Naive thymus-derived CD4-positive, alpha-beta T cell (primary cell): ENCODE measurements at regions of chr7 and their contacts with region 1.

Region 1: GRCh38 chr7:54758702-54759592 is at the start of gene SEC61G:
- DNase-seq: peak; percentile 92 to 96 (median 94)
- ATAC-seq: peak; percentile 98
- H3K4me3 ChIP-seq: peak within 1 kb of the TSS; percentile 67
- H3K4me3 Mint-ChIP-seq: peak within 1 kb of the TSS; percentile 94 to 100 (median 100)
- H3K27ac ChIP-seq: peak within 1 kb of the TSS; percentile 83
- H3K27ac Mint-ChIP-seq: peak within 1 kb of the TSS; percentile 93 to 98 (median 96)
- H3K4me1 ChIP-seq: peaks cover 7 to 11% of the 10 kb centered on the region in 2 donors
- H3K4me1 Mint-ChIP-seq: peaks cover 15 to 54% (median 40%) of the 10 kb centered on the region in 7 donors
- H3K27me3 ChIP-seq: no peaks in the 10 kb centered on the region
- H3K27me3 Mint-ChIP-seq: peaks cover 0 to 21% (median 5%) of the 10 kb centered on the region in 5 donors
- total RNA-seq, gene SEC61G: 31.8 to 174 (median 46.6) TPM

Region 2: DNA sequence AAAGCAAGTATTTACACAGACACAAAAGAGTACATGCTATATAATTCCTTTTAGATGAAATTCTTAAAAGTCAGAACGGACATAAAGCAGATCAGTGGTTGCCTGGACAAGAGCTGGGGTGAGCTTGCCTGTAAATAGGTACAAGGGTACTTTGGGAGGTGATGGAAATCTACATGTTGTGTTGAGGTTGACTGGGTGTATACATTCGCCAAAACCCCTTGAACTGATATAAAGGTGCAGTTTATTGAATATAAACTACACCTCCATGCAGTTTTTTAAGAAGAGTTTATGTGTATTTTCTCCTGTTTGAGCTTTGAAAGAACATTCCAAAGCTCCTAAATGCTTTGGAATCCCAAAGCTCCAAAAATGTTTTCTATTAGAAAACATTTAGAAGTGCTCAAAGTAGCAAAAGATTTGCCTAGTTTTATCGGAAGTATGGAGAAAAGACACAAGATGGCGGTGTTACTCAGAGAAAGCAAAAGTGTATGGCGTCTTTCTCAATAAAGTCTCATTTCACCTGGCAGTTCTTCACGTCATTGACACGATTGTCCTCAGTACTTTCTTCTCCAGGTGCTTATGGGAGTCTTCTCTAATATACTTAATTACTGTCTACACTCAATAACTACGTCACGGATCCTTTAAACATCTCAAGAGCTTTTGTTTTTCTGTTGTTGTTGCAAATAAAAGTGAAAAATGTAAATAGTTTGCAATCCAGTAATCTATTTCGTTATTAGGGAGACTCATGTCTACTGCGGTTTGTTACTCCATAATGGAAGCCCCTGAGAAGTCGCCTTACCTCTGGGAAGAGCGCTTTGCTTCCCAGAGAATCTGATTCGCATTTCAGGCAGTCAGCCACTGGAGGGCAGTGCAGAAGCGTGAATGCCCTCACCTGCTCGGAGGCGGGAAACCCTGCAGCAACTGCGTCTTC is 14.8 kb after region 1 on chr7:
- CTCF ChIA-PET with region 1: interaction called, 16 read pairs
- POLR2A ChIA-PET with region 1: interaction called, 17 read pairs
- intact Hi-C with region 1: loop called (anchors 1 kb)
- DNase-seq: peak; percentile 18 to 67 (median 49)
- ATAC-seq: peak; percentile 94
- H3K4me3 ChIP-seq: peak overlapping the region; percentile 50
- H3K4me3 Mint-ChIP-seq: peak overlapping the region; percentile 60 to 86 (median 79)
- H3K27ac ChIP-seq: no peak overlapping the region
- H3K27ac Mint-ChIP-seq: peak overlapping the region in 7 of 9 donors; percentile 22 to 79 (median 66)
- H3K4me1 ChIP-seq: no peaks in the 10 kb centered on the region
- H3K4me1 Mint-ChIP-seq: peaks cover 0 to 11% (median 4%) of the 10 kb centered on the region in 7 donors
- H3K27me3 ChIP-seq: no peaks in the 10 kb centered on the region
- H3K27me3 Mint-ChIP-seq: peaks cover 8 to 36% (median 35%) of the 10 kb centered on the region in 5 donors

Region 3: GRCh38 chr7:54921116-54921515 is 162.2 kb after region 1 on chr7:
- CTCF ChIA-PET with region 1: no interaction called
- POLR2A ChIA-PET with region 1: no interaction called
- intact Hi-C with region 1: no loop called
- DNase-seq: no peak
- ATAC-seq: no peak
- H3K4me3 ChIP-seq: no peak overlapping the region
- H3K4me3 Mint-ChIP-seq: no peak overlapping the region
- H3K27ac ChIP-seq: no peak overlapping the region
- H3K27ac Mint-ChIP-seq: no peak overlapping the region
- H3K4me1 ChIP-seq: no peaks in the 10 kb centered on the region
- H3K4me1 Mint-ChIP-seq: no peaks in the 10 kb centered on the region
- H3K27me3 ChIP-seq: no peaks in the 10 kb centered on the region
- H3K27me3 Mint-ChIP-seq: peaks cover 0 to 20% (median 12%) of the 10 kb centered on the region in 5 donors

Region 4: DNA sequence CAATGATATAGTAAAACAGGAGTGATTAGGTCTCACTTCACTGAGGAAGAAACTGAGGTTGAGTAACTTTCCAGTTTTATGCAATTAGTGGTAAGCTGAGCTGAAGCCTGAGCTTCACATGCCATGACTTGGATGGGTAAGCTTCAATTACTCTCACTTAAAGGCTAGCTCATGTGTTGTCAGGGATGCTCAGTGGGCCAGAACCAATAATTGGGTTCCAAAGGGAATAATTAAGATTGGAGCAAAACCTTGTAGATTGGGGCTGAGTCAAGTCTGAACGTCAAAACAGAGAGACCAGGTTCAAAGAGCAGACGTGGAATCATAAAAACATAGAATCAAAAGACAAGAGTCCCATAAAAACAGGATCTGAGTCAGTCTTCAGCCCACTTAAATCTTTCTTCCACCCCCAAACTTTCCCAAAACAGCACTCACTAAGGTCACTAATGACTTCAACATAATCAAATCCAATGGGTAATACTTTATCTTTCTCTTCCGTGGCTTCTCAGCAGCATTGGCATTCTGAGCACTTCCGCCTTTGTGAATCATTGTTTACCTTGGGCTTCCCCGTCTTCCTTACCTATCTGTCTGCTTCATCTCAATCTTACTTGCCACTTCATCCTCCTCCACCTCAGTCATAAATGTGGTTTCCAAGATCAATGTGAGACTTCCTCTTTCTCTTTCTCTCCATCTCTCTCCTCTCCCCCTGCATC is 236.8 kb after region 1 on chr7:
- CTCF ChIA-PET with region 1: no interaction called
- POLR2A ChIA-PET with region 1: no interaction called
- intact Hi-C with region 1: loop called in 1 of 2 experiments (anchors 1 kb)
- DNase-seq: peak in 1 of 9 donors; percentile 43
- ATAC-seq: peak; percentile 49
- H3K4me3 ChIP-seq: no peak overlapping the region
- H3K4me3 Mint-ChIP-seq: peak overlapping the region in 9 of 10 donors; percentile 1 to 53 (median 35)
- H3K27ac ChIP-seq: no peak overlapping the region
- H3K27ac Mint-ChIP-seq: peak overlapping the region in 4 of 9 donors; percentile 3 to 50 (median 6)
- H3K4me1 ChIP-seq: no peaks in the 10 kb centered on the region
- H3K4me1 Mint-ChIP-seq: peaks cover 12 to 20% (median 17%) of the 10 kb centered on the region in 7 donors
- H3K27me3 ChIP-seq: no peaks in the 10 kb centered on the region
- H3K27me3 Mint-ChIP-seq: peaks cover 0 to 3% (median 0%) of the 10 kb centered on the region in 5 donors

Region 5: GRCh38 chr7:55255496-55256435 is 496.8 kb after region 1 on chr7:
- CTCF ChIA-PET with region 1: interaction called, 3 read pairs
- POLR2A ChIA-PET with region 1: interaction called, 5 read pairs
- intact Hi-C with region 1: loop called (anchors 1 to 5 kb)
- DNase-seq: peak; percentile 33 to 81 (median 56)
- ATAC-seq: peak; percentile 90
- H3K4me3 ChIP-seq: peak overlapping the region; percentile 58
- H3K4me3 Mint-ChIP-seq: peak overlapping the region; percentile 81 to 94 (median 91)
- H3K27ac ChIP-seq: no peak overlapping the region
- H3K27ac Mint-ChIP-seq: peak overlapping the region in 4 of 9 donors; percentile 30 to 80 (median 59)
- H3K4me1 ChIP-seq: peaks cover 0 to 3% of the 10 kb centered on the region in 2 donors
- H3K4me1 Mint-ChIP-seq: peaks cover 0 to 17% (median 7%) of the 10 kb centered on the region in 7 donors
- H3K27me3 ChIP-seq: peaks cover 0 to 3% of the 10 kb centered on the region in 2 donors
- H3K27me3 Mint-ChIP-seq: peaks cover 48 to 63% (median 51%) of the 10 kb centered on the region in 5 donors

Region 6: DNA sequence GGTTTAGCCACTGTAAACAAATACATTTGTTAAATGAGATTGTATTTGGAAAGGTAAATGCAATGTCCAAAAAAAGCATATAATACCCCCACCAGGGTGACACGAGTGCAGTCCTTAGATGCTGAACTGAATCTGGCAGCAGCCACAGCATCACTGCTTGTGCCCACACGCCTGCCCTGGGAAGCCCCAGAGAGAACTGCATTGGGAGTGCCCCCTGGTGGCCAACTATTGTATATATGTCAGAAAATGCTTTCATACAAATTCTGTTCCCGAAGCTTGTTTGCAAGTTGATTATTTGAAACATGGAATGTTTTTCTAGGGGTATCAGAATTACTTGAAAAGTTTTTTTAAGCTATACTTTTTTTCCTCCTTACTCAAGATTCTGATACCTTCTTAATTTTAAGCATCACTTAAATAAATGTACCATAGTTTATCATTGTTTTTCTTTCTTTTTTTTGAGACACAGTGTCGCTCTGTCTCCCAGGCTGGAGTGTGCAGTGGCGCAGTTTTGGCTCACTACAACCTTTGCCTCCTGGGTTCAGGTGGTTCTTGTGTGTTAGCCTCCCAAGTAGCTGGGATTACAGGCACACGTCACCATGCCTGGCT is 656.3 kb after region 1 on chr7:
- CTCF ChIA-PET with region 1: no interaction called
- POLR2A ChIA-PET with region 1: no interaction called
- intact Hi-C with region 1: loop called in 1 of 2 experiments (anchors 5 kb)
- DNase-seq: peak; percentile 64 to 80 (median 73)
- ATAC-seq: peak; percentile 99
- H3K4me3 ChIP-seq: no peak overlapping the region
- H3K4me3 Mint-ChIP-seq: no peak overlapping the region
- H3K27ac ChIP-seq: no peak overlapping the region
- H3K27ac Mint-ChIP-seq: peak overlapping the region in 3 of 9 donors; percentile 2 to 39 (median 32)
- H3K4me1 ChIP-seq: no peaks in the 10 kb centered on the region
- H3K4me1 Mint-ChIP-seq: peaks cover 0 to 5% (median 2%) of the 10 kb centered on the region in 7 donors
- H3K27me3 ChIP-seq: no peaks in the 10 kb centered on the region
- H3K27me3 Mint-ChIP-seq: no peaks in the 10 kb centered on the region

Region 7: DNA sequence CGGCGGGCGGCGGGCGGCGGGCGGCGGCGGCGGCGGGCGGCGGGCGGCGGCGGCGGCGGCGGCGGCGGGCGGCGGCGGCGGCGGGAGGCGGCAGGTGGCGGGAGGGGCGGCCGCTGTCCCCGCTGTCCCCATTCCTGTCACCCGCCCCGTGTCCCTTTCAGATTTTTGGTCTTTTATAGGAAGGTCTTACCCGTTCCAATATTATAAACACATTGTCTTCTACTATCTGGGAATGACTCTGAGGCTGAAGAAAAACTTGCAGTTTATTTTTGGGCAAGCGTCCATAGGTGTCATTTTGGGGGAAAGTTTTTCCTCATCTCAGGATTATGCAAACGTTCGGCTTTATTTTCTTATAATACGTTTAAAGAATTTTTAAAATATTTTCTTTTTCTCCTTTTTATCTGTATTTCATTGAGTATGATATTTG is 1128.9 kb after region 1 on chr7:
- CTCF ChIA-PET with region 1: no interaction called
- POLR2A ChIA-PET with region 1: no interaction called
- intact Hi-C with region 1: loop called (anchors 1 to 5 kb)
- DNase-seq: peak in 2 of 9 donors; percentile 2 to 6
- ATAC-seq: no peak
- H3K4me3 ChIP-seq: peak overlapping the region; percentile 46
- H3K4me3 Mint-ChIP-seq: peak overlapping the region; percentile 82 to 89 (median 86)
- H3K27ac ChIP-seq: peak overlapping the region; percentile 61
- H3K27ac Mint-ChIP-seq: peak overlapping the region; percentile 83 to 94 (median 90)
- H3K4me1 ChIP-seq: no peaks in the 10 kb centered on the region
- H3K4me1 Mint-ChIP-seq: peaks cover 0 to 10% (median 5%) of the 10 kb centered on the region in 7 donors
- H3K27me3 ChIP-seq: no peaks in the 10 kb centered on the region
- H3K27me3 Mint-ChIP-seq: no peaks in the 10 kb centered on the region

Region 8: GRCh38 chr7:55951637-55952351 is 1192.8 kb after region 1 on chr7 and contains the start of gene MRPS17:
- CTCF ChIA-PET with region 1: no interaction called
- POLR2A ChIA-PET with region 1: no interaction called
- intact Hi-C with region 1: loop called in 1 of 2 experiments (anchors 5 kb)
- DNase-seq: peak; percentile 86 to 96 (median 94)
- ATAC-seq: peak; percentile 100
- H3K4me3 ChIP-seq: peak within 1 kb of the TSS; percentile 68
- H3K4me3 Mint-ChIP-seq: peak within 1 kb of the TSS; percentile 84 to 99 (median 96)
- H3K27ac ChIP-seq: peak within 1 kb of the TSS; percentile 86
- H3K27ac Mint-ChIP-seq: peak within 1 kb of the TSS; percentile 92 to 98 (median 96)
- H3K4me1 ChIP-seq: peaks cover 0 to 4% of the 10 kb centered on the region in 2 donors
- H3K4me1 Mint-ChIP-seq: peaks cover 10 to 33% (median 24%) of the 10 kb centered on the region in 7 donors
- H3K27me3 ChIP-seq: no peaks in the 10 kb centered on the region
- H3K27me3 Mint-ChIP-seq: peaks cover 0 to 2% (median 0%) of the 10 kb centered on the region in 5 donors
- total RNA-seq, gene MRPS17: 8.3 to 16.7 (median 12.0) TPM